AG04450 (cell line): ENCODE measurements at regions of chr5 and their contacts with region 1.

Region 1: GRCh38 chr5:76641514-76642120 is 18.4 kb upstream of the F2RL2 start:
- DNase-seq: peak; percentile 55
- H3K4me3 ChIP-seq: no peak overlapping the region
- H3K27ac ChIP-seq: no peak overlapping the region
- H3K27me3 ChIP-seq: no peaks in the 10 kb centered on the region
- CTCF ChIP-seq: peak; percentile 87

Region 2: GRCh38 chr5:76560952-76561891 is 80.4 kb before region 1 on chr5:
- CTCF ChIA-PET with region 1: no interaction called
- POLR2A ChIA-PET with region 1: no interaction called
- DNase-seq: no peak
- H3K4me3 ChIP-seq: no peak overlapping the region
- H3K27ac ChIP-seq: no peak overlapping the region
- H3K27me3 ChIP-seq: peaks cover 3% of the 10 kb centered on the region
- CTCF ChIP-seq: no peak

Region 3: DNA sequence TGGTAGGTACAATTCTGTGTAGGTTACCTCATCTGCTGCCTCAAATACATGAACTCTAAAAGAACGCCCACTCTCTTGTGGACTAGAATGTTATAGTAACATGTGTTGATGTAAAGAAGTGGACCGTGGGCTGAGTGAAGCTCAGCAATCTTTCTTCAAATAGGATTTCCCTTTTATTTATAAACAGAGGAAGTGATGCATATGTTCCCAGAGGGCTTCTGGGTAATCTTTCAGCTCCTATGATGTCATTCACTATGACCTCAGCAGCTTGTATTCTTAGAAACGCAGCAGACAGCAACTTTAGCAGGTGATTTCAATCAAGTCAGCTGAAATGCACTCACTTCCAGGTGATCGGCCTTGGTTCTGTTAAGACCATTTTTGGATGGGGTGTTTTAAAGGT is 32.8 kb before region 1 on chr5:
- CTCF ChIA-PET with region 1: interaction called, 68 read pairs
- POLR2A ChIA-PET with region 1: no interaction called
- DNase-seq: peak; percentile 79
- H3K4me3 ChIP-seq: no peak overlapping the region
- H3K27ac ChIP-seq: peak overlapping the region; percentile 54
- H3K27me3 ChIP-seq: no peaks in the 10 kb centered on the region
- CTCF ChIP-seq: no peak

Region 4: DNA sequence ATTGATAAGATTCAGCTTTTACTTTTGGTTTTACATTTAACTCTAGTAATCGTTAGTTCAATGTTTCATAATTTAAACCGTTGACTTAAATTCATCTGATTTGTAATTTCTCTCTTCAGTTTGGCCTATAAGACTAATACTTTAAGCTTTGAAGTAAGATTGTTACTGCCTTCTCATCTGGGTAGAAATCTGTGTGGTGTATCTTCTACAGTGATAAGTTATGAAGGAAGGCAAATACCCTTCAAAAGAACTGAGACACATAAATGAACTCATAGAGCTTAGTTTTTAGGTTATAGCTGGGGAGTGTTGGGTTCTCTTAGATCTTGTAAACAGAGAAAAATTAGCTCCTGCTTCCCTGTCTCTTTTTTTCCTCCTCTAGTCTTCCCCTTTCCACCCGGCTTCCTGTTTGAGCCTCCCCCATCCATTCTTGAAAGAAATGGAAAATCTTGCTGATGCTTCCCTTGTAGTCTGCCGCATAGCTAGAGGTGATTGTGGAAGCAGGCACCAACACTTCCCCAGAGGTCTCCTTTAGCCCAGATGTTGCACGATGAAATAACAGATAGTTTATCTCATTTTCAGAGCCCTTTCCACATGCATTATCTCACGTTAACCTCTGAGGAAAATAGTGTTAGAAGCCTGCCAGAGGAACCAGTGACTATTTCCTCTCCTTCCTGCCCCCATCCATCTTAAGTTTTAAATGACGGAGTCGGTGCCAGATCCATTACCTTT is 16.4 kb before region 1 on chr5:
- CTCF ChIA-PET with region 1: interaction called, 16 read pairs
- POLR2A ChIA-PET with region 1: no interaction called
- DNase-seq: no peak
- H3K4me3 ChIP-seq: no peak overlapping the region
- H3K27ac ChIP-seq: no peak overlapping the region
- H3K27me3 ChIP-seq: no peaks in the 10 kb centered on the region
- CTCF ChIP-seq: no peak

Region 5: DNA sequence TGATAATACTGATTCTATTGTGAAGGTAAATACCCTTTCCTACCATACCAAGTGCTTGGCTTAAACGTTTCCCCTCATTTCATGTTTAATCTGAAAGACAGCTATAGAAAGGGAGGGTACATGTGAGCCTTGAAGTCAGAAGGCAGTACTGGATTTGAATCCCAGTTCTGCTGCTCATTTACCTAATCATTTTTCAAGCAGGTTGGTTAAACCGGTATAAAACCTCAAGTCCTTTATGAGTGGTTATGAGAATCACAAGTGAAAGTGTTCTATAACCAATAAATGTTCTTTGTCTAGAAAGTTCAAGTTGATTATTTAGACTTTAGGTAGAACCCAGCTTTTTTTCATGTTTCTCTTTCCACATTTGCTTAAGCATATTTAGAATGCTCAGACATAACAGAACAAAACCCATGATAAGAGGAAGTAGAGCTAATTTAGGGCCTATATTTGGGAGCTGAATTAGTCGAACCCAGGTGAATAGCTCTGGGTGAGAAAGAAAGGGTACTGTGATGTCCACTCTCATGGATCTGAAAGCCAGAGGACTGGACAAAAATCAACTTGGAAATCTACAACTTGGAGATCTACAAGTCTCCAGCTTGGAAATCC is 11.3 kb after region 1 on chr5:
- CTCF ChIA-PET with region 1: interaction called, 15 read pairs
- POLR2A ChIA-PET with region 1: no interaction called
- DNase-seq: no peak
- H3K4me3 ChIP-seq: no peak overlapping the region
- H3K27ac ChIP-seq: no peak overlapping the region
- H3K27me3 ChIP-seq: no peaks in the 10 kb centered on the region
- CTCF ChIP-seq: no peak

Region 6: DNA sequence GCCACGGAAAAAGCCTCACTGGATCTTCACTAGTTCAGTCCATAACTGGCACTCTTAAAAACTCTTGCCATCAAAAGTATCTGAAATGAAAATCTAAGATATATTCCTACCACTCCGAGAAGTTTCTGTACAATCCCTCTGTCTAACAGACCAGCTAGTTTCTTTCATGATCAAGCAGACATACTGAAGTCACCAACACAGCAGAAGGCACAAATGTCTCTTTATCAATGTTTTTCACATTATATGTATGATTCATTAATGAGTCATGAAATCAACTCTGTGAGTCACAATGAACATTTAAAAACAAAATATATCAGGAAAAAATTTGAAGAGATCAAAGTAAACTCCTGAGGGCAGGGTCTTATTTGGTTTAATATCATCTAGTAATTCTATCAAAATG is 125.1 kb after region 1 on chr5:
- CTCF ChIA-PET with region 1: no interaction called
- POLR2A ChIA-PET with region 1: no interaction called
- DNase-seq: no peak
- H3K4me3 ChIP-seq: no peak overlapping the region
- H3K27ac ChIP-seq: no peak overlapping the region
- H3K27me3 ChIP-seq: no peaks in the 10 kb centered on the region
- CTCF ChIP-seq: no peak

Region 7: GRCh38 chr5:76818844-76819831 is 177.5 kb after region 1 on chr5 and contains the start of gene F2RL1:
- CTCF ChIA-PET with region 1: interaction called, 10 read pairs
- POLR2A ChIA-PET with region 1: no interaction called
- DNase-seq: no peak
- H3K4me3 ChIP-seq: peak within 1 kb of the TSS; percentile 84
- H3K27ac ChIP-seq: no peak within 1 kb of the TSS
- H3K27me3 ChIP-seq: no peaks in the 10 kb centered on the region
- CTCF ChIP-seq: no peak
- polyA plus RNA-seq, gene F2RL1: 11.0 and 11.4 TPM in 2 replicates